ENCODE measurements at regions of chr10 and their contacts with region 1.

Region 1: GRCh38 chr10:94320285-94320914 is 42.3 kb downstream of the NOC3L start:
- DNase-seq: peak; percentile 36
- H3K4me3 Mint-ChIP-seq: no peak overlapping the region
- H3K27ac Mint-ChIP-seq: no peak overlapping the region
- H3K4me1 Mint-ChIP-seq: no peaks in the 10 kb centered on the region
- H3K27me3 Mint-ChIP-seq: no peaks in the 10 kb centered on the region

Region 2: GRCh38 chr10:93816123-93816747 is 504.2 kb before region 1 on chr10:
- intact Hi-C with region 1: loop called (anchors 5 kb)
- DNase-seq: no peak
- H3K4me3 Mint-ChIP-seq: no peak overlapping the region
- H3K27ac Mint-ChIP-seq: no peak overlapping the region
- H3K4me1 Mint-ChIP-seq: no peaks in the 10 kb centered on the region
- H3K27me3 Mint-ChIP-seq: peaks cover 13% of the 10 kb centered on the region

Region 3: GRCh38 chr10:94279835-94280709 is 40.3 kb before region 1 on chr10:
- intact Hi-C with region 1: loop called (anchors 1 kb)
- DNase-seq: peak; percentile 38
- H3K4me3 Mint-ChIP-seq: no peak overlapping the region
- H3K27ac Mint-ChIP-seq: no peak overlapping the region
- H3K4me1 Mint-ChIP-seq: no peaks in the 10 kb centered on the region
- H3K27me3 Mint-ChIP-seq: peaks cover 8% of the 10 kb centered on the region

Region 4: GRCh38 chr10:94292434-94293090 is 27.8 kb before region 1 on chr10:
- intact Hi-C with region 1: no loop called
- DNase-seq: no peak
- H3K4me3 Mint-ChIP-seq: no peak overlapping the region
- H3K27ac Mint-ChIP-seq: no peak overlapping the region
- H3K4me1 Mint-ChIP-seq: no peaks in the 10 kb centered on the region
- H3K27me3 Mint-ChIP-seq: peaks cover 21% of the 10 kb centered on the region

Measured in activated T-helper 1 cell treated with anti-CD3 and anti-CD28 coated beads, Interleukin-12 subunit alpha, Interleukin-12 subunit beta, Interleukin-2, Interleukin-4 antibody, amounts not matched to agents 30 ng/mL and 10 ng/mL and 1 ng/mL, durations not matched to agents 14 hours and 24 hours and 36 hours (primary cell).